ENCODE measurements at regions of chr5 and their contacts with region 1.

Region 1: DNA sequence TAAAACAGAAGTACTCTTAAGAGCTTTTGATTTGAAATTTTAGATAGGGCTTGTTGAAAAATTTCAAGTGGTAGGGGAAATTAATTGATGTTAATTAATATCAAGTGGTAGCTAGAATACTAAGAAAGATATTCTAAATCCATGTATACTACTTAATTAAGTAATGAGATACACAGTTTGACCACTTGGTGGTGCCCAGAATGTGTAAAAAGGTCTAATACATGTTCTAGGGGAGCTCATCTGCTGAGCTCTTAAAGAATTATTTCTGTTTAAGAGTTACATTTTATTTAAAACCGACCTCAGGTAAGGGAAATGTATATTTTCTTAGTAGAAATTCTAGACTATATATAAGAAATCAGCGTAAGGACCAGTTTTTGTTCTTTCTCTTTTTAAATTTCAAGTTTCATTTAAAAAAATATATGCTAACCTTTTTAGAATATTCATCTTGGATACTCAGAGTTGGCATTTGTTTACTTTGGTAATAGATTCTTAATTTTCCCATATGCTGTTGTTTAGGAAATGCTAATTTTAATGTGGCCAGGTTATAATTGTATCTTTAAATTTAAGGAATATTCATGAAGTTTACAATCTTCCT is 61.5 kb downstream of the LNPEP start:
- DNase-seq: no peak
- H3K4me3 ChIP-seq: no peak overlapping the region
- H3K27ac ChIP-seq: no peak overlapping the region
- H3K27me3 ChIP-seq: no peaks in the 10 kb centered on the region
- CTCF ChIP-seq: peak in 54 of 56 donors; percentile 22 to 79 (median 60)

Region 2: GRCh38 chr5:97142521-97143254 is 145.3 kb after region 1 on chr5 and contains the start of gene LIX1:
- intact Hi-C with region 1: loop called in 1 of 2 experiments (anchors 5 kb)
- DNase-seq: peak; percentile 11 to 80 (median 58)
- H3K4me3 ChIP-seq: peak within 1 kb of the TSS in 56 of 59 donors; percentile 1 to 62 (median 38)
- H3K27ac ChIP-seq: peak within 1 kb of the TSS in 17 of 59 donors; percentile 7 to 52 (median 25)
- H3K27me3 ChIP-seq: peaks cover 0 to 3% (median 0%) of the 10 kb centered on the region in 45 donors
- CTCF ChIP-seq: peak in 55 of 56 donors; percentile 34 to 85 (median 67)
- total RNA-seq, gene LIX1: 4.5 to 44.2 (median 17.9) TPM

Region 3: DNA sequence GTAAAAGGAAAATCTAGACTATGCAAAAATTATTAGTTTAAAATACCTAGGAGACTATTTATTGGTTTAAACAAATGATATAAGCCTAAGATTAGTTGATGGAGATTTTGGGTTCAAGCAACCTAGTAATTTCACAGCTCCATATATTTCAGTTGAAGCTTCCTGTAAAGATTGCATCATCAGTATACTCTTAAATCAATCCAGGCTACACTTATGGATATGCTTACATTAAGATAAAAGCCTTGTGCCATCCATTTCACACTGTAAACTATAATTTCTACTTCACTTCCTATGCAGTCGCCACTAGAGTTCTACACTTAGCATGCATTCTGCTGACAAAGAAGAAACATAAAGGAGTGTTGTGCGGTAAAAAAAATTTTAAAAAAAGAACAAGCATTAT is 152.3 kb after region 1 on chr5:
- intact Hi-C with region 1: loop called (anchors 5 to 10 kb)
- DNase-seq: no peak
- H3K4me3 ChIP-seq: no peak overlapping the region
- H3K27ac ChIP-seq: no peak overlapping the region
- H3K27me3 ChIP-seq: no peaks in the 10 kb centered on the region
- CTCF ChIP-seq: no peak